ENCODE measurements at regions of chr4 and their contacts with region 1.

Region 1: DNA sequence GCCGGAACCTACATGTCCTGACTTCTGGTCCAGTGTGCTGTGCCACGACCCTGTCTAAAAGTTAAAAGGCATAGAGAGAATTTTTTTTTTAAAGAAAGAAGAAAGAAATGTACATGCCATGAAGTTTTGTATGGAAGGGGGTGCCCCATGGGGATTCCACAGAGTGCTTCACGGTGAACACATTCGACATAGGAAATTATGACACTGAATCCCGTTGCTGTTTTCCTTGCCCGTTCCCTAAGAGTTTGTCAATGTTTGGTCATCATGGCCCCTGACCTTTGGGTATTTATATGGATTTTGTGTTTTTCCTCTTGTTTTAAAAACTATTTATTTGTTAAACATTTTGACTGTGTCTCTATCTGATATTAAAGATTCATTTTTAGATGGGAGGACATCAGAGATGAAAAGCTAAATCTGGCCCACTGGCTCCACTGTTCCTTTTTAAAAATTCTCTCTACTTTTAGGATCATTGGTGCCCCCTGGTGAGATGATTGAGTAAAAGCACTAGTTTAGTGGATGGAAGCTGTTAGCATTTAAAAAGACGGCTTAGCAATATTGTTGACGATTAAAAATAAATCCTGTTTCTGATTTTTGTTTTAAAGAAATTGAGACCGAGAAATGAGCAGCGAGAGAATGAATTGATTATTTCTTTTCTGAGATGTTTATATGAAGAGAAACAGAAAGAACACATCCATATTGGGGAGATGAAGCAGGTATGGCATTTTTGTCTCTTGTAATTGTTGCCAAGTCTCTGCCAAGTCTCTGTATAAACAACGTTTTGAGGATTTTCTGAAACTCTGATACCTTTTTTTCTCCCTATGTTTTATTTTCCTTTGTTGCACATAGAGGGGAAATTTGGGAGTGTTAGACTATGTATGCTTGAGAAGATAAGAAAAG is 75.0 kb downstream of the PTTG2 start:
- DNase-seq: peak; percentile 70
- ATAC-seq: peak; percentile 85
- H3K4me3 ChIP-seq: no peak overlapping the region
- H3K27ac ChIP-seq: no peak overlapping the region
- H3K4me1 ChIP-seq: peaks cover 1% of the 10 kb centered on the region; the same call in 1 of the 2 replicates
- H3K27me3 ChIP-seq: no peaks in the 10 kb centered on the region
- CTCF ChIP-seq: peak; percentile 75
- POLR2A ChIP-seq: no peak
- RAD21 ChIP-seq: peak; percentile 75

Region 2: DNA sequence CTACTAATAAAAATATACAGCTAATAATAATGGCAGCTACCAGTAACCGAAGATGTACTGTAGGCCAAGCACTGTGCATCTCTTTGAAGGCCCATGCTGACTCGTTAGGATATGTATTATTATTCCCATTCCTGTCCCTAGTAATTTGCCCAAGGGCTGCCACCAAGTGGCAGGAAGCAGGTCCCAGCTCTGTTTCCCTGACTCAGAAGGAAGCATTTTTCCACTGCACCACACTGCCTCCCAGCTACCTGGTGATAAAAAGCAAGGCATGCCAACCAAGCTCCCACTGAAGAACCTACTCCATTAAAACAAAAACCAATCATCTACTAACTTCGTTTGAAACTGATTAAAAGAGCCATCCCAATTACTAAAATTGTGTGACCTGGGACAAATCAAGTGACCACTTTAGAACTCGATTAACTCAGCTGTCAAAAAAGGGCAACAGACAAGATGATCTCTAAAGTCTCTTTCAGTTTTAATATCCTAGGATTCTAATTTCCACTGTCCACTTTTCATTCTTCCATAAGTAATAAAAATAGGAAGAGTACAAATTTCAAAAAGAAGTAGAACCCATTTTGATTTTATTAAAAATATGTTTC is 233.1 kb before region 1 on chr4:
- CTCF ChIA-PET with region 1: interaction called, 9 read pairs
- POLR2A ChIA-PET with region 1: no interaction called
- dilution Hi-C with region 1: no loop called
- in situ Hi-C with region 1: loop called (anchors 5 kb)
- intact Hi-C with region 1: loop called (anchors 1 kb)
- DNase-seq: peak; percentile 60
- ATAC-seq: peak; percentile 87
- H3K4me3 ChIP-seq: no peak overlapping the region
- H3K27ac ChIP-seq: no peak overlapping the region
- H3K4me1 ChIP-seq: no peaks in the 10 kb centered on the region
- H3K27me3 ChIP-seq: peaks cover 7% of the 10 kb centered on the region
- CTCF ChIP-seq: peak; percentile 73
- POLR2A ChIP-seq: no peak
- RAD21 ChIP-seq: peak; percentile 70